Colonic mucosa (tissue), 4 donors: ENCODE measurements at regions of chr15 and their contacts with region 1.

Region 1: GRCh38 chr15:45457641-45458433 is 64.7 kb downstream of the SLC30A4 start:
- DNase-seq: peak; percentile 95
- H3K4me3 ChIP-seq: peak overlapping the region; percentile 12
- H3K27ac ChIP-seq: peak overlapping the region; percentile 58
- H3K4me1 ChIP-seq: peaks cover 13% of the 10 kb centered on the region
- H3K27me3 ChIP-seq: no peaks in the 10 kb centered on the region
- CTCF ChIP-seq: peak; percentile 95

Region 2: GRCh38 chr15:45414215-45414885 is 43.5 kb before region 1 on chr15:
- intact Hi-C with region 1: loop called (anchors 2 kb)
- DNase-seq: no peak
- H3K4me3 ChIP-seq: no peak overlapping the region
- H3K27ac ChIP-seq: no peak overlapping the region
- H3K4me1 ChIP-seq: no peaks in the 10 kb centered on the region
- H3K27me3 ChIP-seq: no peaks in the 10 kb centered on the region
- CTCF ChIP-seq: no peak

Region 3: DNA sequence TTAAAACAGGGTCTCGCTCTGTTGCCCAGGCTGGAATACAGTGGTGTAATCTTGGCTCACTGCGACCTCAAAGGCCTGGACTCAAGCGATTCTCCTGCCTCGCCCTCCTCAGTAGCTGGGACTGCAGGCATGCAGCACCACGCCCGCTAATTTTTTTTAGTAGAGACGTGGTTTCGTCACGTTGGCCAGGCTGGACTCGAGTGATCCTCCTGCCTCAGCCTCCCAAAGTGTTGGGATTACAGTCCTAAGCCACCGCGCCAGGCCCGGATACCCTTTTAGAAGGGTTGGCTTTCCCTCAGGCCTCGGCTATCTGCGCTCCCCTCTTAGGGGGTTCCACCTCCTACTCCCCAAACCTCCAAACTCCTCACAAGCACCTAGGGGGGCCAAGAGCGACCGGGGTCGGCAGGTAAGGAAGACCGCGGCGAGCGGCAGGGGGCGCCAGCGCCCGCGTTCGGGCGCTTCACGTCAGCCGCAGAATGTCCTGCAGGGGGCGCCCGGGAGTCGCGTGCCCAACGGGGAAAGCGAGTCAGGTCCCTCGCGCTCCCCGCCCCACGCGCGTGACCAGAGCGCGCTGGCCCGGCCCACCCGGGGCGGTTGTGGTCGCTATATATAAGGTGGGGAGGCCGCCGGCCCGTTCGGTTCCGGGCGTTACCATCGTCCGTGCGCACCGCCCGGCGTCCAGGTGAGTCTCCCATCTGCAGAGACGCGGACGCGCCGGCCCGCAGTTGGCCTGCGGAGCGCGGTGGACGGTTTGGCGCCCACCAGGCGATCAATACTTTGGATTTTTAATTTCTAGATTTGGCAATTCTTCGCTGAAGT is 27.7 kb before region 1 on chr15:
- intact Hi-C with region 1: loop called (anchors 1 kb)
- DNase-seq: peak; percentile 95
- H3K4me3 ChIP-seq: peak overlapping the region; percentile 46
- H3K27ac ChIP-seq: peak overlapping the region; percentile 78
- H3K4me1 ChIP-seq: peaks cover 5% of the 10 kb centered on the region
- H3K27me3 ChIP-seq: no peaks in the 10 kb centered on the region
- CTCF ChIP-seq: peak; percentile 100

Region 4: GRCh38 chr15:45612790-45613415 is 155.1 kb after region 1 on chr15:
- intact Hi-C with region 1: loop called (anchors 2 kb)
- DNase-seq: no peak
- H3K4me3 ChIP-seq: no peak overlapping the region
- H3K27ac ChIP-seq: no peak overlapping the region
- H3K4me1 ChIP-seq: peaks cover 5% of the 10 kb centered on the region
- H3K27me3 ChIP-seq: no peaks in the 10 kb centered on the region
- CTCF ChIP-seq: no peak